WTC11 (cell line): ENCODE measurements at regions of chr2 and their contacts with region 1.

Region 1: GRCh38 chr2:219689676-219690628 is 62.5 kb downstream of the SLC4A3 start:
- DNase-seq: peak; percentile 55
- ATAC-seq: peak; percentile 34
- H3K4me3 Mint-ChIP-seq: no peak overlapping the region
- H3K27ac Mint-ChIP-seq: no peak overlapping the region; the same call in 1 of the 2 replicates
- H3K4me1 Mint-ChIP-seq: peaks cover 51% of the 10 kb centered on the region
- H3K27me3 Mint-ChIP-seq: no peaks in the 10 kb centered on the region; the same call in 1 of the 2 replicates
- CTCF ChIP-seq: peak; percentile 70

Region 2: DNA sequence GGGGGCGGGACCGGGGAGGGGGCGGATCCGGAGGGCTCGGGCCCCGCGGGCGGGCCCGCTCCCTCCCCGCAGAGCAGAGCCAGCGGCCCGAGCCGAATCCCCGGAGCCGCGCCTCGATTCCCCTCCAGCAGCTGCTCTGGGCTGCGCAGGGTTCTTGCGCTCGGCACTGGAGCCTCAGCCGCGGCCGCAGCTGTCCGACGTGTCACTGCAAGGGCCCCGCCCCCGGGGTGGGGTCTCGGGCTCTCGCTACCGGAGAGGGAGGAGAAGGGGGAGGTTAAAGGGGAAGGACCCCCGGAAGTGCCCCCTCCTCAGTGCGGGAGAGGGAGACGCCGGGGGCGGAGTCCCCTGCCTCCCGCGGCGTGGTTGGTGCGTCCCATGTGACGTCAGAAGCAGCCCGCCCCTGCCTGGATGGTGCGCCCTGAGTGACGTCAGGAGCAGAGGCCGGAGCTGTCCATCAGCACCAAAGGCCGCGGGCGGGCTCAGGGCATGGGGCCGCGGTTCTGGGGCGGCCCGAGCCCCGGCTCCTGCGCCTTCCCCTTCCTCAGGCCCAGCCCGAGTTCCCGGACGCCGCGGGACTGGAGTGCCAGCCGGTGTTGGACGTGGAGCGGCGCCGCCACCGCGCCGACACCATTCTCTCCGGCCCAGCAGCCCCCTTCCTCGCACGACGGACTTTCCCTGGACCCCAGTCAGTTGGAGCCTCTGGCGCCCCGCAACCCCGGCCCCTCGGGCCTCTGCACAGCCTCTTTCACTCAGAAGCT is 146.2 kb before region 1 on chr2 and contains the starts of genes CHPF and TMEM198:
- CTCF ChIA-PET with region 1: interaction called, 14 read pairs
- POLR2A ChIA-PET with region 1: no interaction called
- DNase-seq: peak; percentile 99
- ATAC-seq: peak; percentile 84
- H3K4me3 Mint-ChIP-seq: peak within 1 kb of the TSS; percentile 86
- H3K27ac Mint-ChIP-seq: no peak within 1 kb of the TSS
- H3K4me1 Mint-ChIP-seq: peaks cover 18% of the 10 kb centered on the region
- H3K27me3 Mint-ChIP-seq: peaks cover 28% of the 10 kb centered on the region
- CTCF ChIP-seq: no peak
- total RNA-seq, gene CHPF: 84.3 to 97.0 TPM (median 84.8 TPM) in 3 replicates
- total RNA-seq, gene TMEM198: 7.1 to 8.1 TPM (median 7.3 TPM) in 3 replicates

Region 3: DNA sequence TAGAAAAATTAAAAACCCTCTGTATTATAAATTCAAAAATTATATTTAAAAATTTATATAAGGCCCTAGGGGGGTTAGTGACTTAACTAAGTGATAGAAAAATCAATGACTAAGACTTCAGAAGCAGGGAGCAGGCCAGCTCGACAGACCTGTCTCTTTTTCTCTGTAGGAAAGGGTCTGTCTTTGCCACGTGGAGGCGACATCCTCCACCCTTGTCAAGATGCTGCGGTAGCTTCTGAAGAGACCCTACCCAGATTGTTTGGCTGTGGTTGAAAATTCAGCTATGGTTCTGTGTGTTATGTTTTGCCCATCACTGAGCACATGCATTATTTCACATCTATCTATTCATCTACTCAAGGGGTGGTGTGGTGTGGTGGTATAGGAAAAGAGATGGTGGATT is 70.7 kb before region 1 on chr2:
- CTCF ChIA-PET with region 1: interaction called, 27 read pairs
- POLR2A ChIA-PET with region 1: no interaction called
- DNase-seq: no peak
- ATAC-seq: peak; percentile 79
- H3K4me3 Mint-ChIP-seq: no peak overlapping the region
- H3K27ac Mint-ChIP-seq: no peak overlapping the region
- H3K4me1 Mint-ChIP-seq: no peaks in the 10 kb centered on the region
- H3K27me3 Mint-ChIP-seq: peaks cover 2% of the 10 kb centered on the region
- CTCF ChIP-seq: no peak

Region 4: GRCh38 chr2:219650426-219651248 is 39.3 kb before region 1 on chr2:
- CTCF ChIA-PET with region 1: interaction called, 72 read pairs
- POLR2A ChIA-PET with region 1: interaction called, 3 read pairs
- DNase-seq: no peak
- ATAC-seq: 0 out of 2 replicates have a peak, but pooled peaks have one; percentile 29
- H3K4me3 Mint-ChIP-seq: no peak overlapping the region
- H3K27ac Mint-ChIP-seq: no peak overlapping the region
- H3K4me1 Mint-ChIP-seq: peaks cover 5% of the 10 kb centered on the region
- H3K27me3 Mint-ChIP-seq: no peaks in the 10 kb centered on the region; the same call in 1 of the 2 replicates
- CTCF ChIP-seq: no peak

Region 5: GRCh38 chr2:219675221-219675620 is 14.7 kb before region 1 on chr2:
- CTCF ChIA-PET with region 1: interaction called, 11 read pairs
- POLR2A ChIA-PET with region 1: interaction called, 3 read pairs
- DNase-seq: no peak
- ATAC-seq: no peak
- H3K4me3 Mint-ChIP-seq: no peak overlapping the region
- H3K27ac Mint-ChIP-seq: no peak overlapping the region
- H3K4me1 Mint-ChIP-seq: peaks cover 21% of the 10 kb centered on the region
- H3K27me3 Mint-ChIP-seq: no peaks in the 10 kb centered on the region
- CTCF ChIP-seq: no peak

Region 6: GRCh38 chr2:219701847-219702634 is 12.1 kb after region 1 on chr2:
- CTCF ChIA-PET with region 1: interaction called, 15 read pairs
- POLR2A ChIA-PET with region 1: no interaction called
- DNase-seq: no peak
- ATAC-seq: peak; percentile 61
- H3K4me3 Mint-ChIP-seq: no peak overlapping the region
- H3K27ac Mint-ChIP-seq: no peak overlapping the region
- H3K4me1 Mint-ChIP-seq: peaks cover 57% of the 10 kb centered on the region
- H3K27me3 Mint-ChIP-seq: peaks cover 27% of the 10 kb centered on the region
- CTCF ChIP-seq: no peak